ENCODE measurements at regions of chr9 and their contacts with region 1.

Region 1: GRCh38 chr9:6667633-6668280 is 22.2 kb upstream of the GLDC start:
- DNase-seq: no peak
- ATAC-seq: no peak
- H3K4me3 ChIP-seq: no peak overlapping the region
- H3K4me1 ChIP-seq: no peaks in the 10 kb centered on the region
- CTCF ChIP-seq: no peak

Region 2: GRCh38 chr9:6584881-6585597 is 82.7 kb before region 1 on chr9:
- intact Hi-C with region 1: loop called in 1 of 2 experiments (anchors 10 kb)
- DNase-seq: no peak
- ATAC-seq: no peak
- H3K4me3 ChIP-seq: no peak overlapping the region
- H3K4me1 ChIP-seq: no peaks in the 10 kb centered on the region
- CTCF ChIP-seq: no peak

Measured in mucosa of descending colon (tissue), 3 donors.